ENCODE measurements at regions of chr14 and their contacts with region 1.

Region 1: GRCh38 chr14:60724137-60724619 is at the start of gene SIX4:
- DNase-seq: peak; percentile 92
- ATAC-seq: peak; percentile 81
- H3K4me3 ChIP-seq: peak within 1 kb of the TSS; percentile 71
- H3K27ac ChIP-seq: peak within 1 kb of the TSS; percentile 78
- H3K4me1 ChIP-seq: peaks cover 10% of the 10 kb centered on the region
- H3K27me3 ChIP-seq: no peaks in the 10 kb centered on the region
- CTCF ChIP-seq: no peak
- POLR2A ChIP-seq: peak; percentile 82
- RAD21 ChIP-seq: peak; percentile 6; the same call in 1 of the 2 replicates
- total RNA-seq, gene SIX4: 28.1 and 42.7 TPM in 2 replicates

Region 2: DNA sequence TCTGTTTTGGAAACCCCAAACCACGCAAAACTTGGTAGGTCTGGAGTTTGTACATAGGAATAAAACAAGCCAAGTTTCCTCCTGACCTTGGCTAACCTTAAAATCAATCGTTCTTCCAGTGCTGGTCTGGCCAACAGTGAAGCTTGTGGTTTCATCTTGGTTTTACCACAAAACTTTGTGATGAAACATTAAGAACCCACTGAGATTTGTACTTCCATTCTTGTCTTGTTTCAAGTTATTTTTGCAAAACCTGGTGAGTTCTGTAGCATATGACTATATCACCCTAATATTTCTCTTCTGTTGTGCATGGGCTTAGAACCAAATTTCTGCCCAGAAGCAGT is 101.3 kb before region 1 on chr14:
- CTCF ChIA-PET with region 1: no interaction called
- POLR2A ChIA-PET with region 1: no interaction called
- dilution Hi-C with region 1: no loop called
- in situ Hi-C with region 1: no loop called
- intact Hi-C with region 1: loop called (anchors 1 kb)
- DNase-seq: peak; percentile 70
- ATAC-seq: no peak
- H3K4me3 ChIP-seq: no peak overlapping the region
- H3K27ac ChIP-seq: peak overlapping the region; percentile 53; the same call in 1 of the 2 replicates
- H3K4me1 ChIP-seq: peaks cover 8% of the 10 kb centered on the region
- H3K27me3 ChIP-seq: no peaks in the 10 kb centered on the region
- CTCF ChIP-seq: no peak
- POLR2A ChIP-seq: no peak
- RAD21 ChIP-seq: no peak

Region 3: GRCh38 chr14:60637479-60638315 is 86.5 kb before region 1 on chr14:
- CTCF ChIA-PET with region 1: no interaction called
- POLR2A ChIA-PET with region 1: no interaction called
- dilution Hi-C with region 1: no loop called
- in situ Hi-C with region 1: loop called (anchors 5 kb)
- intact Hi-C with region 1: no loop called
- DNase-seq: peak; percentile 53
- ATAC-seq: peak; percentile 76
- H3K4me3 ChIP-seq: peak overlapping the region; percentile 6; the same call in 1 of the 2 replicates
- H3K27ac ChIP-seq: peak overlapping the region; percentile 58
- H3K4me1 ChIP-seq: peaks cover 16% of the 10 kb centered on the region
- H3K27me3 ChIP-seq: no peaks in the 10 kb centered on the region
- CTCF ChIP-seq: 0 out of 2 replicates have a peak, but pooled peaks have one; percentile 9
- POLR2A ChIP-seq: no peak
- RAD21 ChIP-seq: 0 out of 2 replicates have a peak, but pooled peaks have one; percentile 6

Region 4: GRCh38 chr14:60679566-60680258 is 44.5 kb before region 1 on chr14:
- CTCF ChIA-PET with region 1: no interaction called
- POLR2A ChIA-PET with region 1: no interaction called
- dilution Hi-C with region 1: no loop called
- in situ Hi-C with region 1: no loop called
- intact Hi-C with region 1: no loop called
- DNase-seq: no peak
- ATAC-seq: no peak
- H3K4me3 ChIP-seq: no peak overlapping the region
- H3K27ac ChIP-seq: no peak overlapping the region
- H3K4me1 ChIP-seq: no peaks in the 10 kb centered on the region
- H3K27me3 ChIP-seq: no peaks in the 10 kb centered on the region
- CTCF ChIP-seq: no peak
- POLR2A ChIP-seq: no peak
- RAD21 ChIP-seq: no peak

Region 5: GRCh38 chr14:60734465-60735242 is 10.5 kb after region 1 on chr14 and contains the start of gene MNAT1:
- CTCF ChIA-PET with region 1: interaction called, 3 read pairs
- POLR2A ChIA-PET with region 1: interaction called, 8 read pairs
- dilution Hi-C with region 1: no loop called
- in situ Hi-C with region 1: no loop called
- intact Hi-C with region 1: loop called (anchors 1 kb)
- DNase-seq: peak; percentile 88
- ATAC-seq: peak; percentile 96
- H3K4me3 ChIP-seq: peak within 1 kb of the TSS; percentile 99
- H3K27ac ChIP-seq: peak within 1 kb of the TSS; percentile 94
- H3K4me1 ChIP-seq: peaks cover 3% of the 10 kb centered on the region
- H3K27me3 ChIP-seq: no peaks in the 10 kb centered on the region
- CTCF ChIP-seq: no peak
- POLR2A ChIP-seq: peak; percentile 63; the same call in 1 of the 2 replicates
- RAD21 ChIP-seq: peak; percentile 41
- total RNA-seq, gene MNAT1: 48.2 and 53.9 TPM in 2 replicates

Region 6: DNA sequence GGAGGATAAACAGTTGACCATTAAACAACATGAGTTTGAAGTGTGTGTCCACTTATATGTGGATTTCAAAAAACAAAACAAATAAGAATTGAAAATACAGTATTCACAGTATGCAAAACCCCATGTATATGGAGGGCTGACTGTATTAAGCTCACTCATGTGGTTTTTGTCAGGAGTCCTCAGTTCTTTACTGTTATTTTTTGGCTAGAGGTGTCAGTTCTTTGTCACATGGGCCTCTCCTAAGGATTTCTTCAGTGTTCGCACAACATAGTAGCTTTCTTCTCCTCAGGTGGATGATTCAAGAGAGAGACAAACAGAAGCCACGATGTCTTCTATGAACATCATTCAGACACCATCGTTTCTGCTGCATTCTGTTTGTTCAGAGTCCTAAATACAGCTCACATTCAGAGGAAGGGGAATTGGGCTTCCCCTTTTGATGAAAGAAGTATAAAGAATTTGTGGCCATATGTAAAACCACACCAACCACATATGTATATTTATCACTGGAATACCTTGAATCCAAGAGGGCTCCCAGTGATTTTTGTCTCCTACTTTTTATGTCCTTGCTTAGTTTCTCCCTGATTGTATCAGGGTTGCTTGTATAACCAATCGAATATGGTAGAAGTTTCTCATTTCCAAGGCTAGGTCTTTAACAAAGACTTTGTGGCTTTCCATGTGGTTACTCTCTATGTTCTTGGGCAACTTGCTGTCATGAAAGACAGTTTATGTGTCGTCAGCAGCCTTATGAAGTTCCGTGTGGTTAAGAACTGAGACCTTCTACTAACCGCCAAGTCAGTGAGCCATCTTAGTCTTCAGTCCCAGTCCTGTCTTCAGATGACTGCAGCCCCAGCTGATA is 29.3 kb after region 1 on chr14:
- CTCF ChIA-PET with region 1: no interaction called
- POLR2A ChIA-PET with region 1: no interaction called
- dilution Hi-C with region 1: no loop called
- in situ Hi-C with region 1: no loop called
- intact Hi-C with region 1: no loop called
- DNase-seq: peak; percentile 40
- ATAC-seq: no peak
- H3K4me3 ChIP-seq: no peak overlapping the region
- H3K27ac ChIP-seq: no peak overlapping the region
- H3K4me1 ChIP-seq: peaks cover 6% of the 10 kb centered on the region
- H3K27me3 ChIP-seq: no peaks in the 10 kb centered on the region
- CTCF ChIP-seq: no peak
- POLR2A ChIP-seq: no peak
- RAD21 ChIP-seq: no peak

Region 7: DNA sequence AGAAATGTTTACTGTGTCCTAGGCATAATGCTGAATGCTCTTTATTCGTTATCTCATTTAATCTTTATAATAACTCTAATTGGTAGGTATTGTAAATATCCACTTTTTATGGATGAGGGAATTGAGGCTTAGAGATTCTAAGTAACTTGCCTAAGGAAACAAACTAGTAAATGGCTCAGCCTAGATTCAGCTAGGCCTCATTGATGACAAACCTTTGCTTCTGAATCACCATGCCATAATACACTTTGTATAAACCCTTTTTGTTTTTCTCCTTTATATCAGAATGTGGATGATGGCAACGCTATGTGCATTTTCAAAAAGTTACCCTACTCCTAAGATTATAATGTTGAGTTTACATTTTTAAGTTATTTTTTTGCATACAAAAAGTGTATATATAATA is 44.4 kb after region 1 on chr14:
- CTCF ChIA-PET with region 1: no interaction called
- POLR2A ChIA-PET with region 1: no interaction called
- dilution Hi-C with region 1: no loop called
- in situ Hi-C with region 1: no loop called
- intact Hi-C with region 1: no loop called
- DNase-seq: peak; percentile 66
- ATAC-seq: peak; percentile 78
- H3K4me3 ChIP-seq: no peak overlapping the region
- H3K27ac ChIP-seq: no peak overlapping the region
- H3K4me1 ChIP-seq: no peaks in the 10 kb centered on the region; the same call in 1 of the 2 replicates
- H3K27me3 ChIP-seq: no peaks in the 10 kb centered on the region
- CTCF ChIP-seq: no peak
- POLR2A ChIP-seq: no peak
- RAD21 ChIP-seq: no peak

Region 8: GRCh38 chr14:60805841-60806569 is 81.8 kb after region 1 on chr14:
- CTCF ChIA-PET with region 1: no interaction called
- POLR2A ChIA-PET with region 1: no interaction called
- dilution Hi-C with region 1: no loop called
- in situ Hi-C with region 1: no loop called
- intact Hi-C with region 1: no loop called
- DNase-seq: peak; percentile 63
- ATAC-seq: peak; percentile 24
- H3K4me3 ChIP-seq: no peak overlapping the region
- H3K27ac ChIP-seq: no peak overlapping the region
- H3K4me1 ChIP-seq: 0 out of 2 replicates have a peak, but pooled peaks cover 2% of the 10 kb centered on the region
- H3K27me3 ChIP-seq: no peaks in the 10 kb centered on the region
- CTCF ChIP-seq: no peak
- POLR2A ChIP-seq: no peak
- RAD21 ChIP-seq: no peak

Region 9: DNA sequence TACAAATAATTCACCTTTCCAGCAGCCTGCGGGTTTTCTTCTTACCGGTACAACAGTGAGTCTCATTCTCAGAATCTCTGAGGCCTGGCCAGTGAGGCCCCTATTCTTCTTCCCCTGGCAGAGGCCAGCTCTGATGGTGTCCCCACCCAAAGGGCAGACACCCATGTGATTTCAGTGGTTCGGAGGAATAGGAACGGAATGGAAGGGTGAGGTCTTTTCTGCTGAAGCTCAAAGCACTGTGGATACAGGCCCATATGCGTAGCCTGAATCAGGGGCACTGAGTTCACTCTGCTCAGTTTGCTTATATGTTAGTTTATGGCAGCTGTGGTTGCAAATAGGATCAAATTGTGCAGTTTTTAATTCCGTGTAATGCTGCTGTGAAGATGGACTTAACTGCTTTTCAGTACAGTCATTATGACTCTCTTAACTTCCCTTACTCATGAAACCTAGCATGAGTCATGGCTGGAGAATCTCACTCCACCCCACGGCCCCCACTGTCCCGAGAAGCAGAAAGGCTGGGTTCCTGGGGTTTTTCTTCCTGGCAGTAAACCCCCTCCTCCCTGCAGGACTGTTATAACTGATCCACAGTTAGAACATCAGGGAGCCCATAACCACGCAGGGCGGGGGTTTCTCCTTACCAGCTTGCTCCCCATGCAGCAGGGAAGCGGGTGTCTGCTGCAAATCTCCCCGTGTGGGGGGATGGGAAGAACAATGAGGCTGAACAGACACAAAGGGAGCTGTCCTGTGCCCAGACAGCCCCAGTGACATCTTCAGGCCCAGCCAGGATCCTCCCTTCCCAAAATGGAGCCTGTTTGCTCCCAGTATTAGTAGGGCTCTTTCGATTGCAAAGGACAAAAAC is 379.5 kb after region 1 on chr14:
- CTCF ChIA-PET with region 1: no interaction called
- POLR2A ChIA-PET with region 1: interaction called, 14 read pairs
- dilution Hi-C with region 1: no loop called
- in situ Hi-C with region 1: no loop called
- intact Hi-C with region 1: loop called (anchors 5 kb)
- DNase-seq: peak; percentile 99
- ATAC-seq: peak; percentile 88
- H3K4me3 ChIP-seq: no peak overlapping the region
- H3K27ac ChIP-seq: peak overlapping the region; percentile 95
- H3K4me1 ChIP-seq: peaks cover 42% of the 10 kb centered on the region
- H3K27me3 ChIP-seq: no peaks in the 10 kb centered on the region
- CTCF ChIP-seq: no peak
- POLR2A ChIP-seq: no peak
- RAD21 ChIP-seq: no peak